PC-3 (cell line): ENCODE measurements at regions of chr14 and their contacts with region 1.

Region 1: DNA sequence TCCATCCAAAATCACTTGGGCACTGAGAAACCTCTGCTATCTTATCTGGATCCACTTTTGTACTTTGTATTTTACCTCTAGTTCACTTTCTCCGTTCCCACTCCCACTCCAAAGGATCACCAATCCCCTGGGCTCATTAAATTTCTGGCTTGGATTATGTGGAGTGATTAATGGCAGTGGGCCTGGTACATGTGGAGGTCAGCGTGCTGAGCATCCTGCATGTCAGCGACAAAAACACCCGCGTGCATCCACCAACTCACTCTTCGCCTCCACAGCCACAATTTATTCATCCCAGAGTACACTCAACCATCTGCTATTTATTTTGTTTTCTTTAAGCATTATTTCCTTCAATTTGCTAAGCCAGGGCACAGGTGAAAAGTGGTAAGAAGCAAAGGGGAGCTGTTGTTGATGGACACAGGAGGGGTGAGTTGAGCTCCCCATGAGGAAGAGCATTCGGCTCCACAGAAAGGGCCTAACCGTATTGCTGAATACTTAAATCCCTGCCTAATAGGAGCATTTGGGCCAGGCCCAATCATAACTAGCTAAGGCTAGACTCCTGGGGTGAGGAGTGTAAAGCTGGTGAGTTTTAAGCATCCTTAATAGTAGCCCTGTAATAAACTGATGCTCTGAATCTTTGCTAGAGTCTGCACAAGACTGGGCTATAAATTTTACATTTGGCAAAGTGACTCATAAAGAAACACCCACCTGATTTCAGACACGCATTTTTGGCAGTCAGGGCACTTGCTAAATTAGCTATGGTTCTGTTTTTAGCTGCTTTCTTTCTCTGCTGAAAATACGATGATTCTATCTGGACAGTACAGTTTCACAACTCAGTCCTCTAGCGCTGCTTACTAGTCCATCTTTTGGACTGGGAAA is 137.8 kb downstream of the SLC25A21 start:
- DNase-seq: no peak
- ATAC-seq: no peak
- H3K4me3 ChIP-seq: no peak overlapping the region
- H3K27ac ChIP-seq: no peak overlapping the region
- H3K4me1 ChIP-seq: peaks cover 30% of the 10 kb centered on the region
- H3K27me3 ChIP-seq: no peaks in the 10 kb centered on the region
- CTCF ChIP-seq: no peak

Region 2: DNA sequence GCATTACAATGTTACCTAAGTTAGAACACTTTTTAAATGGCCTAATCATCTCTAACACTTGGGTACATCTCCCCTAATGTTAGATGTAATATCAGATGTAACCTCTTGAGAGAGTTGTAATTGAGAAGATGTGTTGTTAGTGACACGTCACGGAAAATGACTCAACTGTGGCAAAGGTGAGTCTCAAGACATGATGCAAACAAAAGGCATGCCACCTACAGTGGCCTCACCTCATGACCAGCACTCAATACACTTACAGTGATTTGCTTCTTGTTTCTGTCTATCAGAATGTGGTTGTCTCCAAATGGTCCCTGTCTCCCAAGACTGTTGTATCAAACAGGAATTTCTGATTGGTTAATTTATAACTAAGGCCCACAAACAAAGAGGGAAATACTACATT is 46.6 kb after region 1 on chr14:
- CTCF ChIA-PET with region 1: no interaction called
- POLR2A ChIA-PET with region 1: no interaction called
- intact Hi-C with region 1: loop called (anchors 5 kb)
- DNase-seq: peak; percentile 93
- ATAC-seq: peak; percentile 94
- H3K4me3 ChIP-seq: no peak overlapping the region
- H3K27ac ChIP-seq: peak overlapping the region; percentile 17; the same call in 1 of the 2 replicates
- H3K4me1 ChIP-seq: peaks cover 12% of the 10 kb centered on the region
- H3K27me3 ChIP-seq: no peaks in the 10 kb centered on the region
- CTCF ChIP-seq: no peak